B cell (primary cell): ENCODE measurements at regions of chr12 and their contacts with region 1.

Region 1: GRCh38 chr12:22544038-22544979 is at the start of gene C2CD5:
- DNase-seq: peak; percentile 98
- ATAC-seq: peak; percentile 87
- H3K4me3 ChIP-seq: peak within 1 kb of the TSS; percentile 75 to 86 (median 84)
- H3K4me3 Mint-ChIP-seq: peak within 1 kb of the TSS; percentile 96
- H3K27ac ChIP-seq: peak within 1 kb of the TSS; percentile 92 to 93
- H3K27ac Mint-ChIP-seq: peak within 1 kb of the TSS; percentile 97
- H3K4me1 ChIP-seq: peaks cover 34 to 39% of the 10 kb centered on the region in 2 donors
- H3K4me1 Mint-ChIP-seq: peaks cover 34% of the 10 kb centered on the region
- H3K27me3 ChIP-seq: no peaks in the 10 kb centered on the region
- H3K27me3 Mint-ChIP-seq: peaks cover 4% of the 10 kb centered on the region
- CTCF ChIP-seq: peak; percentile 33
- total RNA-seq, gene C2CD5: 59.3 and 61.7 TPM in 2 replicates

Region 2: DNA sequence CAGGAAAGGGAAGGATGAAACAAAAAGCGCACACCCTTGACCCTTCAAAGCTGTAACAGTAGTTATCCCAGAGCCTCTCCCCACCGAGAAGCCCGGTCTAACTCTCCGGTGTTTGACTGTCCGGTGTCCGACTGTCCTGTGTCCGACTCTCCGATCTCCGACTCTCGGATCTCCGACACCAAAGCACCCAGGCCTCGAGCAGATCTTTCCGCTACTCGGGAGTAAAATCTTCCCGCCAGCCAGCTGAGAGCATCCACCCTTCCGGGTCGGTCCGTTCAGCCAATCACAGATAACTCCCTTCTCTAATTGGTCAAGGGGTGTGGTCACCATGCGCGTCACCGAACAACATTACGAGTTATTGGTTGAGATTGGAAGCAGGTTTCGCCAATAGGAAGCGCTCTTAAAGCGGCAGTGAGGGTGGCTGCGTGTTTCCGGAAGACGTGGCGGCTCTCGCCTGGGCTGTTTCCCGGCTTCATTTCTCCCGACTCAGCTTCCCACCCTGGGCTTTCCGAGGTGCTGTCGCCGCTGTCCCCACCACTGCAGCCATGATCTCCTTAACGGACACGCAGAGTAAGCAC is 1042.8 kb before region 1 on chr12 and contains the starts of genes GOLT1B and RECQL:
- CTCF ChIA-PET with region 1: no interaction called
- POLR2A ChIA-PET with region 1: no interaction called
- intact Hi-C with region 1: loop called (anchors 5 kb)
- DNase-seq: peak; percentile 96
- ATAC-seq: peak; percentile 95
- H3K4me3 ChIP-seq: peak within 1 kb of the TSS; percentile 69 to 97 (median 92)
- H3K4me3 Mint-ChIP-seq: no peak within 1 kb of the TSS
- H3K27ac ChIP-seq: peak within 1 kb of the TSS; percentile 70 to 89
- H3K27ac Mint-ChIP-seq: no peak within 1 kb of the TSS
- H3K4me1 ChIP-seq: peaks cover 26 to 28% of the 10 kb centered on the region in 2 donors
- H3K4me1 Mint-ChIP-seq: peaks cover 37% of the 10 kb centered on the region
- H3K27me3 ChIP-seq: no peaks in the 10 kb centered on the region
- H3K27me3 Mint-ChIP-seq: no peaks in the 10 kb centered on the region
- CTCF ChIP-seq: no peak
- total RNA-seq, gene GOLT1B: 25.1 and 26.3 TPM in 2 replicates
- total RNA-seq, gene RECQL: 54.8 and 56.3 TPM in 2 replicates

Region 3: DNA sequence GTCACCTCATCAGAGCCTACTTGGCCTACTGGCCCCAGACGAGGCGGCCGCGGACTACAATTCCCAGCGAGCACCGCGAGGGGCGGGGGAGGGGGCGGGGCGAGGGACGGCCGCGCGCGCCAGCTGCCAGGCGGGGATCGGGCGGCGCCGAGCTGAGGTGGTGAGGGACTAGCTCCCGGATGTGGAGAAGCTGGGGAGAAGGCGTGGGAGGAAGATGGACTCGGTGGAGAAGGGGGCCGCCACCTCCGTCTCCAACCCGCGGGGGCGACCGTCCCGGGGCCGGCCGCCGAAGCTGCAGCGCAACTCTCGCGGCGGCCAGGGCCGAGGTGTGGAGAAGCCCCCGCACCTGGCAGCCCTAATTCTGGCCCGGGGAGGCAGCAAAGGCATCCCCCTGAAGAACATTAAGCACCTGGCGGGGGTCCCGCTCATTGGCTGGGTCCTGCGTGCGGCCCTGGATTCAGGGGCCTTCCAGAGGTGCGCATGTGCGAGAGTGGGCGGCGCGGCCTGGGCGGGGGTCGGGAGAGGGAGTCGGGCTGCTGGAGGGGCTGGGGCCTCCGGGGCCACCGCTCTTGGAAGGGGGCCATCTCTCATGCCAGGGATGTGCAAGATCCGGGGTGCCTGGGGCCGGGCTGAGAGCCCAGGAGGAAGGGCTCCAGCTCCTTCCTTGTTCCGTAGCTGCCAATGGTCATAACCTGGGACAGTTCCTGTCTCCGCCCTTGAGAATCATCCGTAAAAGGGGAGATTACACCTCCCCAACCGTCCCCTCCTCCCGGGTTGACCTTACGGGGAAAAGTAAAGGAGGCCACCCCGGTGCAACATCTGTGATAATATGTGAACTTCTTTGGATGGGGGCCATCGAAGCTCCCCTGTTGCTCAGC is 498.0 kb before region 1 on chr12 and contains the start of gene CMAS:
- CTCF ChIA-PET with region 1: no interaction called
- POLR2A ChIA-PET with region 1: no interaction called
- intact Hi-C with region 1: loop called (anchors 1 kb)
- DNase-seq: peak; percentile 77
- ATAC-seq: peak; percentile 89
- H3K4me3 ChIP-seq: peak within 1 kb of the TSS; percentile 48 to 95 (median 93)
- H3K4me3 Mint-ChIP-seq: peak within 1 kb of the TSS; percentile 95
- H3K27ac ChIP-seq: peak within 1 kb of the TSS; percentile 13 to 69
- H3K27ac Mint-ChIP-seq: peak within 1 kb of the TSS; percentile 81
- H3K4me1 ChIP-seq: peaks cover 5 to 6% of the 10 kb centered on the region in 2 donors
- H3K4me1 Mint-ChIP-seq: peaks cover 23% of the 10 kb centered on the region
- H3K27me3 ChIP-seq: no peaks in the 10 kb centered on the region
- H3K27me3 Mint-ChIP-seq: peaks cover 9% of the 10 kb centered on the region
- CTCF ChIP-seq: no peak
- total RNA-seq, gene CMAS: 16.1 and 19.1 TPM in 2 replicates

Region 4: DNA sequence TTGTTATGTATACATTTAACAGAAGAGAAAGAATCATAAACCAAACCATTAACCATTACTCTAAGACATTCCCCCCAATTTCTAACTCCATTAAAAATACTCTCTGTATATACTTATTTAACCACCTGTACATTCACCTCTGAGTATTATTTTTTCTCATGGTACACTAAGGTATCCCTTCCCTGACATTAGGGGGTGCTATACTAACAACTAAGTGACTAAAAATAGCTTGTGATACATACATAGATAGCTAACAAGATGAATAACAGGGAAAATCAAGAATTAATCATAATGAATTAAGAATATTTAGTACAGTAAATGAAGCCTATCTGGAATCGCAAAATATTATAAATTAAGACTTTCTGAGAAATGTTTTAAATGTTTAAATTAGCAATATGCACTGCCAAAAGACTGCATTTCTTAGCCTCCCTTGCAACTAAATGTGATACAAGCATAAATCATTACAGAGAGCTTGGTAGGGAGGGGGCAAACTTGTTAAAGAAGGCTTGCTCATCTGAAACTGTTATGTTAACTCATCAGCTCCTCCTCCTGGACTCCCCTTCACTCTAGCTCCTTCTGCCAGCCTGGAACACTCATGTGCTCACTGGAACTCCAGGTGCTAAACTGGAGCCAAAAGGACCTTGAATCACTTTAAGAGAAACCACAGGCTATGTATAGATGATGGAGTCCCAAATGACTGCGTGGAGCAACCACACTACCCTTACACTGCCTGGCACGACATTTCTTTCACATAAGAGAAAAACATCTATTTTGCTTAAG is 14.8 kb before region 1 on chr12:
- CTCF ChIA-PET with region 1: interaction called, 17 read pairs
- POLR2A ChIA-PET with region 1: interaction called, 3 read pairs
- intact Hi-C with region 1: loop called (anchors 1 kb)
- DNase-seq: peak; percentile 57
- ATAC-seq: peak; percentile 61
- H3K4me3 ChIP-seq: no peak overlapping the region
- H3K4me3 Mint-ChIP-seq: no peak overlapping the region
- H3K27ac ChIP-seq: no peak overlapping the region
- H3K27ac Mint-ChIP-seq: no peak overlapping the region
- H3K4me1 ChIP-seq: no peaks in the 10 kb centered on the region
- H3K4me1 Mint-ChIP-seq: peaks cover under 1% of the 10 kb centered on the region
- H3K27me3 ChIP-seq: no peaks in the 10 kb centered on the region
- H3K27me3 Mint-ChIP-seq: no peaks in the 10 kb centered on the region
- CTCF ChIP-seq: peak; percentile 74

Region 5: DNA sequence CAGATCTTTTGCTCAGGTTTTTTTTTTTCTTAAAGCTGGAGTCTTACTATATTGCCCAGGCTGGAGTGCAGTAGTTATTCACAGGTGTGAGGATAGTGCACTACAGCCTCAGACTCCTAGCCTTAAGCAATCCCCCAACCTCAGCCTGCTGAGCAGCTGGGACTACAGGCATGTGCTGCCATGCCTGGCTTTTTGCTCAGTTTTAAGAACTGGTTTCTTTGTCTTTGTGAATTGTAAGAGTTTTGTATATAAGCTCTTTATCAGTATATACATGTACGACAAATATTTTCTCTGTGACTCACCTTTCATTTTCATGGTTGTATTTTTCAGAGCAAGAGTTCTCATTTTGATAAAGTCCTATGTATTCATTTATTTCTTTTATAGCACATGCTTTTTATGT is 33.4 kb after region 1 on chr12:
- CTCF ChIA-PET with region 1: no interaction called
- POLR2A ChIA-PET with region 1: no interaction called
- intact Hi-C with region 1: no loop called
- DNase-seq: no peak
- ATAC-seq: no peak
- H3K4me3 ChIP-seq: no peak overlapping the region
- H3K4me3 Mint-ChIP-seq: no peak overlapping the region
- H3K27ac ChIP-seq: no peak overlapping the region
- H3K27ac Mint-ChIP-seq: no peak overlapping the region
- H3K4me1 ChIP-seq: no peaks in the 10 kb centered on the region
- H3K4me1 Mint-ChIP-seq: no peaks in the 10 kb centered on the region
- H3K27me3 ChIP-seq: no peaks in the 10 kb centered on the region
- H3K27me3 Mint-ChIP-seq: no peaks in the 10 kb centered on the region
- CTCF ChIP-seq: no peak

Region 6: GRCh38 chr12:22657538-22657937 is 113.2 kb after region 1 on chr12:
- CTCF ChIA-PET with region 1: no interaction called
- POLR2A ChIA-PET with region 1: no interaction called
- intact Hi-C with region 1: no loop called
- DNase-seq: no peak
- ATAC-seq: no peak
- H3K4me3 ChIP-seq: no peak overlapping the region
- H3K4me3 Mint-ChIP-seq: no peak overlapping the region
- H3K27ac ChIP-seq: no peak overlapping the region
- H3K27ac Mint-ChIP-seq: no peak overlapping the region
- H3K4me1 ChIP-seq: peaks cover 6 to 15% of the 10 kb centered on the region in 2 donors
- H3K4me1 Mint-ChIP-seq: peaks cover 13% of the 10 kb centered on the region
- H3K27me3 ChIP-seq: no peaks in the 10 kb centered on the region
- H3K27me3 Mint-ChIP-seq: no peaks in the 10 kb centered on the region
- CTCF ChIP-seq: no peak

Region 7: GRCh38 chr12:22880807-22881206 is 336.5 kb after region 1 on chr12:
- CTCF ChIA-PET with region 1: no interaction called
- POLR2A ChIA-PET with region 1: no interaction called
- intact Hi-C with region 1: no loop called
- DNase-seq: no peak
- ATAC-seq: no peak
- H3K4me3 ChIP-seq: no peak overlapping the region
- H3K4me3 Mint-ChIP-seq: no peak overlapping the region
- H3K27ac ChIP-seq: no peak overlapping the region
- H3K27ac Mint-ChIP-seq: no peak overlapping the region
- H3K4me1 ChIP-seq: no peaks in the 10 kb centered on the region
- H3K4me1 Mint-ChIP-seq: no peaks in the 10 kb centered on the region
- H3K27me3 ChIP-seq: no peaks in the 10 kb centered on the region
- H3K27me3 Mint-ChIP-seq: peaks cover 3% of the 10 kb centered on the region
- CTCF ChIP-seq: no peak